Activated CD4-positive, alpha-beta T cell treated with anti-CD3 and anti-CD28 coated beads, Interleukin-2, amount 10 ng/mL, durations not matched to agents 7 days and 5 days (primary cell): ENCODE measurements at regions of chr22 and their contacts with region 1.

Region 1: GRCh38 chr22:36856121-36856791 is 4.5 kb upstream of the NCF4 start:
- DNase-seq: peak; percentile 94
- H3K4me3 Mint-ChIP-seq: no peak overlapping the region
- H3K27ac Mint-ChIP-seq: peak overlapping the region; percentile 57
- H3K4me1 Mint-ChIP-seq: peaks cover 48% of the 10 kb centered on the region
- H3K27me3 Mint-ChIP-seq: peaks cover 8% of the 10 kb centered on the region

Region 2: GRCh38 chr22:36613958-36614357 is 242.3 kb before region 1 on chr22:
- CTCF ChIA-PET with region 1: no interaction called
- POLR2A ChIA-PET with region 1: no interaction called
- DNase-seq: no peak
- H3K4me3 Mint-ChIP-seq: no peak overlapping the region
- H3K27ac Mint-ChIP-seq: no peak overlapping the region
- H3K4me1 Mint-ChIP-seq: no peaks in the 10 kb centered on the region
- H3K27me3 Mint-ChIP-seq: peaks cover 22% of the 10 kb centered on the region

Region 3: GRCh38 chr22:36775964-36776669 is 80.1 kb before region 1 on chr22 and contains the start of gene IFT27:
- CTCF ChIA-PET with region 1: interaction called, 25 read pairs
- POLR2A ChIA-PET with region 1: interaction called, 3 read pairs
- DNase-seq: peak; percentile 99
- H3K4me3 Mint-ChIP-seq: peak within 1 kb of the TSS; percentile 88
- H3K27ac Mint-ChIP-seq: peak within 1 kb of the TSS; percentile 95
- H3K4me1 Mint-ChIP-seq: peaks cover 26% of the 10 kb centered on the region
- H3K27me3 Mint-ChIP-seq: no peaks in the 10 kb centered on the region
- total RNA-seq, gene IFT27: 20.7 to 29.0 TPM

Region 4: GRCh38 chr22:36787204-36787988 is 68.9 kb before region 1 on chr22:
- CTCF ChIA-PET with region 1: interaction called, 25 read pairs
- POLR2A ChIA-PET with region 1: no interaction called
- DNase-seq: no peak
- H3K4me3 Mint-ChIP-seq: no peak overlapping the region
- H3K27ac Mint-ChIP-seq: no peak overlapping the region
- H3K4me1 Mint-ChIP-seq: peaks cover 17% of the 10 kb centered on the region
- H3K27me3 Mint-ChIP-seq: peaks cover 2% of the 10 kb centered on the region

Region 5: DNA sequence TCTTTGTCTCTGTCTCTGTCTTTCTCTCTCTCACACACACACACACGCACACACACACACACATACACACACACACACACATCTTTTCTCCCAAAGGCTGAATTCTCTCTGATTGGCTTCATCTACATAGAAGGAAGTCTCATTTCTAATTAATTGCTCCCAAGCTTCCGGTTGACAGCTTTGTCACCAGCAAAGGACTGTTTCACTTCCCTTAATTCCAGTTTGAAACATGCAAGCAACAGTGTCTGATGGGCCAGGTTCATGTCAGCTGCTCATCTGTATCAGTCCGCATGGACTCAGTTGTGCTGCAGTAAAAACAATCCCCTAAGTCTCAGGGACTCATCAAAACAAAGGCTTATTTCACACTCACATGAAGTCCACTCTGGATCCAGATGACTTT is 23.2 kb before region 1 on chr22:
- CTCF ChIA-PET with region 1: interaction called, 12 read pairs
- POLR2A ChIA-PET with region 1: no interaction called
- DNase-seq: no peak
- H3K4me3 Mint-ChIP-seq: no peak overlapping the region
- H3K27ac Mint-ChIP-seq: no peak overlapping the region
- H3K4me1 Mint-ChIP-seq: peaks cover 19% of the 10 kb centered on the region
- H3K27me3 Mint-ChIP-seq: peaks cover 37% of the 10 kb centered on the region

Region 6: DNA sequence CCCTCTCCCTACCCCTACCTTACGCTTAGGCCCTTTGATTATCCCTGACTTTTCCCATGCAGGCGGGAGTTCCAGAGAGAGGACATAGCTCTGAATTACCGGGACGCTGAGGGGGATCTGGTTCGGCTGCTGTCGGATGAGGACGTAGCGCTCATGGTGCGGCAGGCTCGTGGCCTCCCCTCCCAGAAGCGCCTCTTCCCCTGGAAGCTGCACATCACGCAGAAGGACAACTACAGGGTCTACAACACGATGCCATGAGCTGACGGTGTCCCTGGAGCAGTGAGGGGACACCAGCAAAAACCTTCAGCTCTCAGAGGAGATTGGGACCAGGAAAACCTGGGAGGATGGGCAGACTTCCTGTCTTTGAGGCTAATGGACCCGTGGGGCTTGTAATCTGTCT is 21.3 kb after region 1 on chr22:
- CTCF ChIA-PET with region 1: interaction called, 17 read pairs
- POLR2A ChIA-PET with region 1: no interaction called
- DNase-seq: no peak
- H3K4me3 Mint-ChIP-seq: no peak overlapping the region
- H3K27ac Mint-ChIP-seq: no peak overlapping the region
- H3K4me1 Mint-ChIP-seq: peaks cover 27% of the 10 kb centered on the region
- H3K27me3 Mint-ChIP-seq: no peaks in the 10 kb centered on the region

Region 7: GRCh38 chr22:36977947-36978660 is 121.8 kb after region 1 on chr22:
- CTCF ChIA-PET with region 1: interaction called, 22 read pairs
- POLR2A ChIA-PET with region 1: interaction called, 3 read pairs
- DNase-seq: peak; percentile 93
- H3K4me3 Mint-ChIP-seq: peak overlapping the region; percentile 69
- H3K27ac Mint-ChIP-seq: peak overlapping the region; percentile 85
- H3K4me1 Mint-ChIP-seq: peaks cover 9% of the 10 kb centered on the region
- H3K27me3 Mint-ChIP-seq: peaks cover 7% of the 10 kb centered on the region